Mammary epithelial cell (primary cell): ENCODE measurements at regions of chr14 and their contacts with region 1.

Region 1: GRCh38 chr14:101462726-101463585 is 98.3 kb upstream of the DIO3 start:
- DNase-seq: no peak
- H3K4me3 ChIP-seq: no peak overlapping the region
- H3K27ac ChIP-seq: no peak overlapping the region
- H3K4me1 ChIP-seq: no peaks in the 10 kb centered on the region
- H3K27me3 ChIP-seq: peaks cover 10% of the 10 kb centered on the region
- CTCF ChIP-seq: no peak

Region 2: GRCh38 chr14:101347893-101348777 is 114.8 kb before region 1 on chr14:
- CTCF ChIA-PET with region 1: no interaction called
- dilution Hi-C with region 1: loop called (anchors 5 kb)
- in situ Hi-C with region 1: no loop called
- intact Hi-C with region 1: no loop called
- DNase-seq: no peak
- H3K4me3 ChIP-seq: no peak overlapping the region
- H3K27ac ChIP-seq: no peak overlapping the region
- H3K4me1 ChIP-seq: no peaks in the 10 kb centered on the region
- H3K27me3 ChIP-seq: no peaks in the 10 kb centered on the region
- CTCF ChIP-seq: no peak

Region 3: DNA sequence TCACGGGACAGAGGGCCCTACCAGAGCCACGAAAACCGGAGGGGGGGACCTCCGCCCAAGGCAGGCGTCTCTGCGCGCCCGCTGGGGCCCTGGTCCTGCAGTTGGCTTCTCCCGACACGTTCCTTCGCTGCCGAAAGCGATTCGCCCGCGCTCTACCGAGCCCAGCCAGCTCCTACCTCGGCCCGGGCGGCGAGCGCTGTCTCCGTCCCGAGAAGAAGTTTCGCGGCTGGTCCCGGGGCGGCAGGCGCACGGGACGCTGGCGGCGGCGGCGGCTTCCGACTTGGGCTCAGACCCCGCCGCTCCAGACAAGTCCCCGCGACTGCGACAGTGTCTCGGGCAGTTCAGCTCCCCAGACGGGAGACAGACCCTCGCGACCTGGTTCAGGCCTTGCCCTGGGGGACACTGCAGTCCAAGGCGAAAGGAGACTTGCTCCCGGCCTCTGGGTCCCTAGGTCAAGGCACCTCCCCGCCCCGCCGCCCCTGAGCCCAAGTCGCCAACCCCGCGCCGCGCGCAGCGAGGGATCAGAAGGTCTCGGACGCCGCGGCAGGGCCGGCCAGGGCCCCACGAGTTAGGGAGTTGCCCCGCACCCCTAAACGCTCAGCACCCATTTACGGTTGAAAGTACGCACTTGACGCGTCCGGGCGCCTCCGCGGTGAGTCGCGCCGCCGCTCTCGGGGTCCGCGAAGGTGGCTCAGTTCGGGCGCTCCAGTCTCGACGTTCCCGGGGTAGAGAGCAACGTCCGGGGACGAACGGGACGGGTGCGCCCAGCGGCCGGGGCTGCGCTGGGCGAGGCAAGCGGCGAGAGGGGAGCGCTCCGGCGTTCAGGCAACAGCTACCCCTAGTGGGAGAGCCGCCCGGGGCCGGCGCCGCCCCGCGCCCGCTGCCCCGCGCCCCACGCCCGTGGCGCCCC is 96.9 kb after region 1 on chr14:
- CTCF ChIA-PET with region 1: no interaction called
- dilution Hi-C with region 1: loop called (anchors 5 kb)
- in situ Hi-C with region 1: no loop called
- intact Hi-C with region 1: no loop called
- DNase-seq: no peak
- H3K4me3 ChIP-seq: no peak overlapping the region
- H3K27ac ChIP-seq: no peak overlapping the region
- H3K4me1 ChIP-seq: no peaks in the 10 kb centered on the region
- H3K27me3 ChIP-seq: peaks cover 41% of the 10 kb centered on the region
- CTCF ChIP-seq: no peak